CD4-positive, alpha-beta memory T cell (primary cell): ENCODE measurements at regions of chr14 and their contacts with region 1.

Region 1: DNA sequence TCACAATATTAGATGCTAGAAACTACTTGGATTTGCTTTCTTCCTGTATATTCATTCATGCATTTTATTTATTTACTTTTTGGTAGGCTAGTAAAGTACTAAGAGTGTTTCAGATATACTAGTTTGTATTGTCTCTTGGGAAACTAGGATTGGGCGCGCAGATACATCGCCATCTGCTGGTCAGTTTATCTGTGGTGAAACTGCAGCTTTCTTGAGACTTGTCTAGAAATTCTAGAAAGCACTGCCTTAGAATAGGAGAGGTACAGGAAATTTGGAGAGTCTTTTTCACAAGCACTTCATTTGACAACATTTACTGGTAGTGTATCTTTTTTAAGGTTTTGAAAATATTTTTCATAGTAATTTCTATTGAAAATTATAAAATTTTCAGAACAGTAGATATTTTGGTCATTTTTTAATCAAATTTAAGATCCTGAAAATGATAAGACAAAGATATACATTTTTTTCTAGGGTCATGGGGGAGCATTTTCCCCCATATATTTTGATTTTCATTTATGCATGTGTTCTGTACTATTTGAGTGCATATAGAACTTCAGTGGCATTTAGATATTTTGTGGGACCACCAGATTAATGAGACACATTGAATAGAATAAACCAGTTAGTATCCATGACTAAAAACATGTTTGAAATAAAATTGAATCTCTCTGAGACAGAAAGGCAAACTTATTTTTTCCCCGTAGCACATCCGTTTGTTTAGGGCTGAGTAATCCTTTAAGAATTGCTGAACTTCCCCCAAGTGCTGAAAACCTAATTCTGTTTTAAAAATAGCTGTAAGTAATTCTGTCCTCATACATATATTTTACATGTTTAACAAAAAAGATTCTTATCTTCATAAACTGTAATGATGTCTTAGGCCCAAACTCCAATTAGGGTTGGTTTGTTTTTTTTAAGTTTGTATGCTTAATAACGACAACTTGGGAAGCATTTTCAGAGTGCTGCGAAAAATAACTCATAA is 44.5 kb downstream of the SLC38A6 start:
- DNase-seq: peak; percentile 38 to 49 (median 47)
- H3K4me3 ChIP-seq: no peak overlapping the region
- H3K4me3 Mint-ChIP-seq: no peak overlapping the region
- H3K27ac ChIP-seq: no peak overlapping the region
- H3K27ac Mint-ChIP-seq: no peak overlapping the region
- H3K4me1 ChIP-seq: no peaks in the 10 kb centered on the region
- H3K4me1 Mint-ChIP-seq: peaks cover 0 to under 1% (median 0%) of the 10 kb centered on the region in 4 donors
- H3K27me3 ChIP-seq: no peaks in the 10 kb centered on the region
- H3K27me3 Mint-ChIP-seq: no peaks in the 10 kb centered on the region

Region 2: DNA sequence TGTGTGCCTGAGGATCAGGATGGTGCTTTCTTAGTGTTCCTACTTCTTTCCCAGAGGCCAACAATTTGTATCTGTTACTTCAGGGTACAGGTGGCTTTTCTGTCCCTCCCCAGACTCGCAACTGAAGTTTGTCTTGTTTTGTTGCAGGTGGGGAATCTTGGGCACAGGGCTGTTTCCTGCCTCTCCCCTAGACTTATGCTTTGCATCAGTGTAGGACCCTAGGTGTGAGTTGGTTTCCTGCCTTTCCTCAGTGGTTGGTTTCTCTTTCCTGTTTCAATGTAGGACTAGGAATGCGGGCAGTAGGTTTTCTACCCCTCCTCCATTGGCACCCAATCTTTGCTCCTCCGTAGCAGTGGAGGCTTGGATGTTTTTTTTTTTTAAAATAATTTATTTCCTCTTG is 131.6 kb before region 1 on chr14:
- CTCF ChIA-PET with region 1: no interaction called
- POLR2A ChIA-PET with region 1: no interaction called
- intact Hi-C with region 1: no loop called
- DNase-seq: no peak
- H3K4me3 ChIP-seq: no peak overlapping the region
- H3K4me3 Mint-ChIP-seq: no peak overlapping the region
- H3K27ac ChIP-seq: no peak overlapping the region
- H3K27ac Mint-ChIP-seq: no peak overlapping the region
- H3K4me1 ChIP-seq: peaks cover 6% of the 10 kb centered on the region
- H3K4me1 Mint-ChIP-seq: peaks cover 7 to 22% (median 15%) of the 10 kb centered on the region in 4 donors
- H3K27me3 ChIP-seq: no peaks in the 10 kb centered on the region
- H3K27me3 Mint-ChIP-seq: no peaks in the 10 kb centered on the region

Region 3: GRCh38 chr14:60989599-60989998 is 35.9 kb before region 1 on chr14:
- CTCF ChIA-PET with region 1: no interaction called
- POLR2A ChIA-PET with region 1: no interaction called
- intact Hi-C with region 1: no loop called
- DNase-seq: no peak
- H3K4me3 ChIP-seq: no peak overlapping the region
- H3K4me3 Mint-ChIP-seq: no peak overlapping the region
- H3K27ac ChIP-seq: no peak overlapping the region
- H3K27ac Mint-ChIP-seq: no peak overlapping the region
- H3K4me1 ChIP-seq: no peaks in the 10 kb centered on the region
- H3K4me1 Mint-ChIP-seq: peaks cover 0 to 9% (median 4%) of the 10 kb centered on the region in 4 donors
- H3K27me3 ChIP-seq: no peaks in the 10 kb centered on the region
- H3K27me3 Mint-ChIP-seq: no peaks in the 10 kb centered on the region

Region 4: GRCh38 chr14:61252369-61253063 is 227.0 kb after region 1 on chr14:
- CTCF ChIA-PET with region 1: interaction called, 4 read pairs
- POLR2A ChIA-PET with region 1: no interaction called
- intact Hi-C with region 1: loop called (anchors 1 kb)
- DNase-seq: peak; percentile 49 to 69 (median 61)
- H3K4me3 ChIP-seq: no peak overlapping the region
- H3K4me3 Mint-ChIP-seq: no peak overlapping the region
- H3K27ac ChIP-seq: no peak overlapping the region
- H3K27ac Mint-ChIP-seq: peak overlapping the region in 1 of 7 donors; percentile 12
- H3K4me1 ChIP-seq: no peaks in the 10 kb centered on the region
- H3K4me1 Mint-ChIP-seq: peaks cover 0 to 3% (median under 1%) of the 10 kb centered on the region in 4 donors
- H3K27me3 ChIP-seq: peaks cover 3% of the 10 kb centered on the region
- H3K27me3 Mint-ChIP-seq: peaks cover 1 to 5% of the 10 kb centered on the region in 2 donors